Activated CD8-positive, alpha-beta T cell treated with anti-CD3 and anti-CD28 coated beads, Interleukin-2, amount 10 ng/mL, durations not matched to agents 7 days and 5 days (primary cell): ENCODE measurements at regions of chr5 and their contacts with region 1.

Region 1: DNA sequence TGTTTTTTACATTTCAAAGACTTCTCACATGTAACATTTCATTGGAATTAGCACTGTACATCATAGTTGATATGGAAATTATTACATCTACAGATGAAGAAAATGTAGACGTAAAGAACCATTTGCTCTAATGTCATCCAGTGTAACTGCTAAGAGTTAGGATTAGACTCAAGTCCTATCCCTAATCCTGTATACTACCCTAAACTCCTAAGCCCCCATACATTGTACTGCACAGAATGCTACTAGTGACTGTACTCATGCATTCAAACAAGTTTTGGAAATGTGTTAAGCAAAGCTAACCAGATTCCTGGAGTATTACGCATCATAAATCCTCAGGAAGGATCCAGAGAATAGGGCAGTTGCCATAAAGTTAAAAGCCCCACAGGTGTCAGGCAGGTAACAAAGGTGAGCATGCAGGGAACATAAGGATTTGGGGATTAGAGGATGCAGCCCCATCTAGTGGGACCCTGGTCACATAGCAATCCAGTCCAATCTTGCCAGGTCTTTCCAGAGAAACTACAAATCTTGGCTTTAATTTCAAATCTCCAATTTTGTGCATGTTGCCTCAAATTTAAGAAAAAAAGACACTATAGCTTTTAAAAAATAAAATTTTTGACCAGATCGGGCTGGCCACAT is 32.0 kb downstream of the HAVCR1 start:
- DNase-seq: peak; percentile 34
- ATAC-seq: no peak
- H3K4me3 Mint-ChIP-seq: no peak overlapping the region
- H3K27ac Mint-ChIP-seq: peak overlapping the region; percentile 81
- H3K4me1 Mint-ChIP-seq: peaks cover 91% of the 10 kb centered on the region
- H3K27me3 Mint-ChIP-seq: no peaks in the 10 kb centered on the region

Region 2: GRCh38 chr5:156920042-156920860 is 106.7 kb before region 1 on chr5:
- CTCF ChIA-PET with region 1: interaction called, 44 read pairs
- POLR2A ChIA-PET with region 1: interaction called, 22 read pairs
- DNase-seq: peak; percentile 58
- ATAC-seq: peak; percentile 76
- H3K4me3 Mint-ChIP-seq: peak overlapping the region; percentile 65
- H3K27ac Mint-ChIP-seq: peak overlapping the region; percentile 79
- H3K4me1 Mint-ChIP-seq: peaks cover 75% of the 10 kb centered on the region
- H3K27me3 Mint-ChIP-seq: no peaks in the 10 kb centered on the region

Region 3: GRCh38 chr5:156934450-156935211 is 92.3 kb before region 1 on chr5:
- CTCF ChIA-PET with region 1: interaction called, 32 read pairs
- POLR2A ChIA-PET with region 1: interaction called, 7 read pairs
- DNase-seq: peak; percentile 82
- ATAC-seq: peak; percentile 57
- H3K4me3 Mint-ChIP-seq: peak overlapping the region; percentile 18
- H3K27ac Mint-ChIP-seq: peak overlapping the region; percentile 41
- H3K4me1 Mint-ChIP-seq: peaks cover 82% of the 10 kb centered on the region
- H3K27me3 Mint-ChIP-seq: no peaks in the 10 kb centered on the region

Region 4: DNA sequence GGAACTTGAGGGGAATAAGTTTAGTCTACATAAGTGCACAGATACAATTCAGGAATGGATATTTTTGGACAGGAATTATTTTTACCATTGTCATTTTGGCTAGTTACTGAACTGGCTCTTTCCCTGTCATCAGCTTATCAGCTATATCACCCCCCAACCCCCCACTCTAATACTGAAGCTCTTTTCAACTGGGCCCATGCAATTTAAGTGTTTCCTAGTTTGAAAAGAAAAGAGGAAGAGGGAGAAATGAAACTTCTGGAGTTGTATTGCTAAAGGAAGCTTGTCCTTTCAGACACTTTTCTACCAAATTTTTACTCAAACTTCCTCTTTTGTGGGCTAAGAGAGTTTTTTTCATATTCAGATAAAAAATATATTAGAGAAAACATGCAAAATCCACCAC is 45.4 kb before region 1 on chr5:
- CTCF ChIA-PET with region 1: no interaction called
- POLR2A ChIA-PET with region 1: no interaction called
- DNase-seq: no peak
- ATAC-seq: no peak
- H3K4me3 Mint-ChIP-seq: no peak overlapping the region
- H3K27ac Mint-ChIP-seq: no peak overlapping the region
- H3K4me1 Mint-ChIP-seq: peaks cover 11% of the 10 kb centered on the region
- H3K27me3 Mint-ChIP-seq: no peaks in the 10 kb centered on the region

Region 5: GRCh38 chr5:156991714-156992113 is 35.2 kb before region 1 on chr5:
- CTCF ChIA-PET with region 1: no interaction called
- POLR2A ChIA-PET with region 1: no interaction called
- DNase-seq: no peak
- ATAC-seq: no peak
- H3K4me3 Mint-ChIP-seq: no peak overlapping the region
- H3K27ac Mint-ChIP-seq: no peak overlapping the region
- H3K4me1 Mint-ChIP-seq: peaks cover 2% of the 10 kb centered on the region
- H3K27me3 Mint-ChIP-seq: no peaks in the 10 kb centered on the region

Region 6: GRCh38 chr5:157108976-157109375 is 82.1 kb after region 1 on chr5 and contains the start of gene HAVCR2:
- CTCF ChIA-PET with region 1: interaction called, 7 read pairs
- POLR2A ChIA-PET with region 1: interaction called, 21 read pairs
- DNase-seq: peak; percentile 85
- ATAC-seq: peak; percentile 88
- H3K4me3 Mint-ChIP-seq: peak within 1 kb of the TSS; percentile 93
- H3K27ac Mint-ChIP-seq: peak within 1 kb of the TSS; percentile 92
- H3K4me1 Mint-ChIP-seq: peaks cover 72% of the 10 kb centered on the region
- H3K27me3 Mint-ChIP-seq: no peaks in the 10 kb centered on the region
- total RNA-seq, gene HAVCR2: 77.6 to 78.7 TPM

Region 7: DNA sequence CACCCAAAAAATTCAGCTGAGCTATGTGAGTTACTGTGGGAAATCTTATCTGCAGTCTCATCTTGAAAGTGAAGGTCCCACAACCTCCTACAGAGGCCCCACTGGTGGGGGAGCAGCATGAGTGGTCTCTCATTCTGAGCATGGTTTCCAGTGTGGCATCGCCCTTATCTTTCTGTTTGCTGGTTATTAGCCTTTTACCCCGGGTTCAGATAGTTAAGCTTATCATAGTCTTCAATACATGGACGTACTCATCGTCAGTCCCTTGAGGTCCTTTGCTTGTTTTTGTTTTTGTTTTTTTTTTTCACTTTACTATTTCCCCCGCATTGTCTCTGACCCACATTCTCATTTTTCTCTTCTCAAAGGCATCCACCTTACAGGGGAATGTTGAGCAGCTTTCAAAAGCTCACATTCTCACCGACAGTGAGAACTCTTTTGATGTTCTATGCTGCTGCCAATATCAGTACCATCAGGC is 89.6 kb after region 1 on chr5:
- CTCF ChIA-PET with region 1: interaction called, 12 read pairs
- POLR2A ChIA-PET with region 1: interaction called, 4 read pairs
- DNase-seq: no peak
- ATAC-seq: peak; percentile 57
- H3K4me3 Mint-ChIP-seq: peak overlapping the region; percentile 7
- H3K27ac Mint-ChIP-seq: peak overlapping the region; percentile 56
- H3K4me1 Mint-ChIP-seq: peaks cover 43% of the 10 kb centered on the region
- H3K27me3 Mint-ChIP-seq: no peaks in the 10 kb centered on the region